PC-9 (cell line): ENCODE measurements at regions of chr12 and their contacts with region 1.

Region 1: GRCh38 chr12:79535751-79536150 is 155.0 kb downstream of the PAWR start:
- DNase-seq: no peak
- H3K4me3 ChIP-seq: no peak overlapping the region
- H3K27ac ChIP-seq: no peak overlapping the region
- H3K4me1 ChIP-seq: peaks cover 22% of the 10 kb centered on the region
- H3K27me3 ChIP-seq: no peaks in the 10 kb centered on the region
- CTCF ChIP-seq: no peak

Region 2: DNA sequence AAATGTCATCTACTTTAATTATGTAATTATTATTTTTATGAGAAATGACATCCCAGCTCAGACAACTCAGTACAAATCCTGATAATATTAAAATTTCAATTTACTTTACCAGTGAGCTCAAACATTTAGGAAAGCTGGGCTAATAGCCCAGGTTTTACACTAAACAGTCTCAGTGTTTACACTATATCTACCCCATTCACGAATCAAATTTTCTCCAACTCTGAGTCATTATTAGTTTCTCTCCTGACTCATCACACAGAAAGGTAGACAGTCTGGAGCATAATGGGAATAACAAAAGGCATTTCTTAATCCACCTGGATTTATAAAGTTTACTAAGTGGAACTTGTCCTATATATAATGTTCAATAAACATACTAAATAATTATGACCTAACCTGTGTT is 149.3 kb after region 1 on chr12:
- CTCF ChIA-PET with region 1: no interaction called
- POLR2A ChIA-PET with region 1: interaction called, 10 read pairs
- intact Hi-C with region 1: no loop called
- DNase-seq: peak in 1 of 2 experiments; percentile 76
- H3K4me3 ChIP-seq: peak overlapping the region; percentile 82
- H3K27ac ChIP-seq: peak overlapping the region; percentile 99
- H3K4me1 ChIP-seq: peaks cover 58% of the 10 kb centered on the region
- H3K27me3 ChIP-seq: no peaks in the 10 kb centered on the region
- CTCF ChIP-seq: no peak

Region 3: GRCh38 chr12:79706215-79706614 is 170.5 kb after region 1 on chr12:
- CTCF ChIA-PET with region 1: no interaction called
- POLR2A ChIA-PET with region 1: no interaction called
- intact Hi-C with region 1: no loop called
- DNase-seq: peak in 1 of 2 experiments; percentile 80
- H3K4me3 ChIP-seq: no peak overlapping the region
- H3K27ac ChIP-seq: peak overlapping the region; percentile 45
- H3K4me1 ChIP-seq: peaks cover 12% of the 10 kb centered on the region
- H3K27me3 ChIP-seq: no peaks in the 10 kb centered on the region
- CTCF ChIP-seq: no peak